HepG2 (cell line): ENCODE measurements at regions of chr19 and their contacts with region 1.

Region 1: GRCh38 chr19:48795055-48795684 is 15.7 kb downstream of the BCAT2 start:
- DNase-seq: peak; percentile 79
- ATAC-seq: peak; percentile 91
- H3K4me3 ChIP-seq: peak overlapping the region; percentile 39 to 80 (median 59); a peak in 5 of 6 replicates
- H3K27ac ChIP-seq: no peak overlapping the region
- H3K4me1 ChIP-seq: peaks cover 29% of the 10 kb centered on the region
- H3K27me3 ChIP-seq: no peaks in the 10 kb centered on the region
- CTCF ChIP-seq: peak; percentile 97
- EP300 ChIP-seq: no peak
- POLR2A ChIP-seq: peak in 1 of 2 experiments; percentile 39; a peak in 1 of 4 replicates
- RAD21 ChIP-seq: peak; percentile 93

Region 2: DNA sequence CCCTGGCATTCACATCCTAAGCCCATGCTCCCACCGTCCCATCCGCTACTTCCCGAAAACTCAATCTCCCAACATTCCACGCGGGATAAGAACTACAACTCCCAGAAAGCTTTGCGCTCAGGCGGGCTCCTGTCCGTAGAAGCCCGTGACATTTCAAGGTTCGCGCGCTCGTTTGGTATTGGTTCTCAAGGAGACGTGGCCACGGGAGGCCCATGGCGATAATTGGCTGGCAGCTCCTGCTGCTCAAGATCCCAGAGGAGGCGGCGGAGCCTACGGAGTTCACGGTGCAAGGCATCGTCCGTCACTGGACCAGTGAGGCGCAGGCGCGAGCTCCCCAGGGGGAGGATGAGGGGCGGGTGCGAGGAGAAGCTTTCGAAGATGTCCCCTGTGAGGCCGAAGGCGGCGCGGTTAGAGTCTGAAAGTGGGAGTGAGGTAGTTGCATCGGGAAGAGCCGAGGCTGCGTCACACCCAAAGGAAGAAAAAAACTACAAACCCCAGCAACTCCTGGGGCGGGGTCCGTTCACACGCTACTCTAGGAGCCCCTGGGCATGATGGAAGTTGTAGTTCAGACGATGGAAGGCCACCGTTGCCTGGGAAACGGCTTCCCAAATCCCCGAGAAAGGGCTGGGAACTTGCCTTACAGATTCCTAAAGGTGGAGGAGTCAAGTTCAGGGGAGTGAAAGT is 74.4 kb before region 1 on chr19:
- CTCF ChIA-PET with region 1: no interaction called
- POLR2A ChIA-PET with region 1: no interaction called
- in situ Hi-C with region 1: no loop called
- intact Hi-C with region 1: no loop called
- DNase-seq: peak; percentile 98
- ATAC-seq: peak; percentile 83
- H3K4me3 ChIP-seq: peak overlapping the region; percentile 68 to 85 (median 76); a peak in 5 of 6 replicates
- H3K27ac ChIP-seq: peak overlapping the region; percentile 74
- H3K4me1 ChIP-seq: peaks cover 61% of the 10 kb centered on the region
- H3K27me3 ChIP-seq: no peaks in the 10 kb centered on the region; a peak in 1 of 5 replicates
- CTCF ChIP-seq: 0 out of 2 replicates have a peak, but pooled peaks have one; percentile 15
- EP300 ChIP-seq: no peak
- POLR2A ChIP-seq: 0 out of 4 replicates have a peak, but pooled peaks of 1 of the 2 experiments have one; percentile 12
- RAD21 ChIP-seq: no peak

Region 3: DNA sequence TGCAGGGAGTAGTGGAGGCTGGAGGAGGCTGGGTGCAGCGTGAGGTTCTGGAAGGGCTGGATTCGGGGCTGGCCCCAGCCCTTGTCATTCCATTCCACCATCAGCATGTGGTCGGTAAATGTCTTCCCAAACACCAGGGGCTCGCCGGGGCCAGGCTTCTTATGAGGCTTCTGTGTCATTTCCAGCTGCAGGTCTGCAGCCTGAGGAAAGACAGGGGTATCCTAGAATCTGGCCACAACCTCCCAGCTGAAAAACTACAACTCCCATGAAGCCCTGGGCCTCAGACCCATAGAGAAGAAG is 11.3 kb after region 1 on chr19:
- CTCF ChIA-PET with region 1: no interaction called
- POLR2A ChIA-PET with region 1: interaction called, 53 read pairs
- in situ Hi-C with region 1: no loop called
- intact Hi-C with region 1: no loop called
- DNase-seq: no peak
- ATAC-seq: no peak
- H3K4me3 ChIP-seq: peak overlapping the region in 2 of 3 experiments; percentile 73 to 78; a peak in 3 of 6 replicates
- H3K27ac ChIP-seq: peak overlapping the region; percentile 82
- H3K4me1 ChIP-seq: peaks cover 38% of the 10 kb centered on the region
- H3K27me3 ChIP-seq: no peaks in the 10 kb centered on the region
- CTCF ChIP-seq: 0 out of 2 replicates have a peak, but pooled peaks have one; percentile 2
- EP300 ChIP-seq: no peak
- POLR2A ChIP-seq: no peak
- RAD21 ChIP-seq: no peak

Region 4: DNA sequence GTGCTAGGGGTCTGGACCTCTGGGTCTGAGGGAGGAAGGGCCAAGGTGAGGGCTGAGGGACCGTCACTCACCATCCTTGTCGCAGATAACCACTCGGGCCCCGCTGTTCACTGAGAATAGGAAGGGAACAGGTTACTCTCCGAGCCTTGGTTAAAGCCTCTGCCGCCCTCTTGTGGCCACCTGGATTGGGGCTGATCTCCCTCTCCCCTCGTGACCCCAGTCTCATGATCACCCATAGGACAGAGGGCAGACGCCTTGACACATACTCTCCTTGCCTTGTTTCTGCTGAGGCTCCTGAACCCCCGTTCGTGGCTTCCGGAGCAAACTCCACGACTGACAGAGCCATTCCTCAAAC is 40.5 kb after region 1 on chr19:
- CTCF ChIA-PET with region 1: interaction called, 7 read pairs
- POLR2A ChIA-PET with region 1: no interaction called
- in situ Hi-C with region 1: loop called (anchors 5 kb)
- intact Hi-C with region 1: loop called (anchors 1 kb)
- DNase-seq: peak; percentile 82
- ATAC-seq: peak; percentile 97
- H3K4me3 ChIP-seq: peak overlapping the region; percentile 39 to 64 (median 50); a peak in 5 of 6 replicates
- H3K27ac ChIP-seq: peak overlapping the region; percentile 25
- H3K4me1 ChIP-seq: peaks cover 19% of the 10 kb centered on the region
- H3K27me3 ChIP-seq: no peaks in the 10 kb centered on the region
- CTCF ChIP-seq: peak; percentile 97
- EP300 ChIP-seq: no peak
- POLR2A ChIP-seq: no peak
- RAD21 ChIP-seq: peak; percentile 92

Region 5: DNA sequence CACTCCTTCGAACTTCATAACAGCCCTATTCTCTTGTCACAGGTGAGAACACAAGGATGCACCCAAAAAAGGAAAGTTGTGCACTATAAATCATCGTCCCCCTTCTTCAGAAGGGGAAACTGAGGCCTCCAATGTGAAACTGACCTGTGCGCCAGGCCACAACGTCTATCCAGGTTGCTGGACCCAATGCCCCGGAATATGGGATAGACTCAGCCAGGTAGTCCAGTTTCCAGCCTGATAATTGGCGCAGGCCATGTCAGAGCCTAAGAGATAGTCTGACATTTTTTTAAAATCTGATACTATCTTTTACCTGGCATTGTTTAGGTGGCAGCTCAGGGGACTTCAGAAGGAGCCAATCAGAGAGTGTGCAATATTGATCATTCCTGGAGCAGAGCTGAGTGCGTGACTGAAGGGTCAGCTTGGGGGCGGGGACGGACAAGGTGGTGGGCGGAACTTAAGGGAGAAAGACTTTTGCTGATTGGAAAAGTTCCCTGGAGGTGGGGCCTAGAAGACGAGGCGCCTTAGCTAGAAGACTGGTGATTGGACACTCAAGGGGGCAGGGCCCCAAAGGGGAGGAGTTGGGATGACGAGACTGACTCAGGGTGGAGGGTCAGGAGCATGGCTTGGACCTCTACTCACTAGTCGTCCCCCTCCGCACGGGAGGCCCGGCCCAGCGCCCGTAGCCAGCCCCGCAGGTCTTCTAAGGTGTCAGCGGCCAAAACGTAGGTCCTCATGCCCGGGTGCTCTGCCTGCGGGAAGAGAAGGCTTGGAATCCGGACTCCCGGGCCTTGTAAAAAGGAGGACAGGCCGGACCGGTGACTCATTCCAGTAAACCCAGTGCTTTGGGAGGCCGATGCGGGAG is 64.8 kb after region 1 on chr19:
- CTCF ChIA-PET with region 1: no interaction called
- POLR2A ChIA-PET with region 1: no interaction called
- in situ Hi-C with region 1: no loop called
- intact Hi-C with region 1: no loop called
- DNase-seq: no peak
- ATAC-seq: no peak
- H3K4me3 ChIP-seq: no peak overlapping the region
- H3K27ac ChIP-seq: no peak overlapping the region
- H3K4me1 ChIP-seq: no peaks in the 10 kb centered on the region; the same call in 1 of the 2 replicates
- H3K27me3 ChIP-seq: no peaks in the 10 kb centered on the region; a peak in 1 of 5 replicates
- CTCF ChIP-seq: no peak
- EP300 ChIP-seq: no peak
- POLR2A ChIP-seq: no peak
- RAD21 ChIP-seq: no peak